ENCODE measurements at regions of chr20 and their contacts with region 1.

Region 1: DNA sequence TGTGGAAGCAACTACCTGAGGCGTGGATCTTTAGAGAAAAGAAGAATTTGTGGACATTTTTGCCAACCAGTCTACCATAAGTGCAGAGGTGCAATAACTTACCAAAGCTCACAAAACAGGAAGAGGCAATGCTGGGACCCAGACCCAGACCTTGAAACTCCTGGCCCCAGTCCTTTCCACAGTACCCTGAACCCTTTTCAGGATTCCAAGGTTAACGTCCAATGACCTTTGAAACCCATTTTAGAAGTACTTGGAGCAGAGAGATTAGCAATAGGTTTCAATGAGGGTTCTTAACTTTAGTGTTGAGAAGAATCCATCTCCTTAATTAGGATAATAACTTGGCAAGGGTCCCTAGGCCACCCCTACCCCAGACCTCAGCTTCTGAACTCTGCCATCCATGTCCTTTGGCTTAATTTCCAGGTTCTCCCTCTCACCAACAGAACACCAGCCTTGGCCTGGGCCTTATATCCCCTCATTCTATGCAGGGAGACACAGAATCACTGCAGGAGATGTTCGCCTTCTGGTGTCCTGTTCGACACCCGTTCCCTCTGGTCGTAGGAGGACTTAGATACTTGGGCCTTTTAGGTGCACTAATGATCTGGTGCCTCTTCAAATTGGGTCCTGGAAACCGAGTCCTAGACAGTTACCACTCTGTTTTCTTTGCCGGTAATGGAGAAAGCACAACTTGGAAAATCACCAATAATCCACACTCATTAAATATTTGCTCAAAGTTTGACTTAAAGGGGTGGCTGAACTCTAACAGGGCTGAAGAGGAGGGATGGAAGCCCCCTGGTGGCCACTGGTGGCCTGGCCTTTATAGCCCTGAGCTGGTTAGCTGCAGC is 40.6 kb downstream of the ISM1 start:
- DNase-seq: peak; percentile 34 to 75 (median 69)
- ATAC-seq: peak; percentile 84
- H3K4me3 ChIP-seq: no peak overlapping the region
- H3K4me3 Mint-ChIP-seq: no peak overlapping the region
- H3K27ac ChIP-seq: no peak overlapping the region
- H3K27ac Mint-ChIP-seq: no peak overlapping the region
- H3K4me1 ChIP-seq: no peaks in the 10 kb centered on the region
- H3K4me1 Mint-ChIP-seq: peaks cover 4% of the 10 kb centered on the region
- H3K27me3 ChIP-seq: no peaks in the 10 kb centered on the region
- H3K27me3 Mint-ChIP-seq: no peaks in the 10 kb centered on the region
- CTCF ChIP-seq: peak; percentile 80

Region 2: GRCh38 chr20:13251106-13251903 is 10.4 kb before region 1 on chr20:
- CTCF ChIA-PET with region 1: interaction called, 27 read pairs
- POLR2A ChIA-PET with region 1: interaction called, 5 read pairs
- intact Hi-C with region 1: no loop called
- DNase-seq: no peak
- ATAC-seq: no peak
- H3K4me3 ChIP-seq: no peak overlapping the region
- H3K4me3 Mint-ChIP-seq: no peak overlapping the region
- H3K27ac ChIP-seq: no peak overlapping the region
- H3K27ac Mint-ChIP-seq: no peak overlapping the region
- H3K4me1 ChIP-seq: peaks cover 39% of the 10 kb centered on the region
- H3K4me1 Mint-ChIP-seq: peaks cover 39% of the 10 kb centered on the region
- H3K27me3 ChIP-seq: no peaks in the 10 kb centered on the region
- H3K27me3 Mint-ChIP-seq: no peaks in the 10 kb centered on the region
- CTCF ChIP-seq: no peak

Region 3: GRCh38 chr20:13312300-13312699 is 50.6 kb after region 1 on chr20:
- CTCF ChIA-PET with region 1: no interaction called
- POLR2A ChIA-PET with region 1: no interaction called
- intact Hi-C with region 1: no loop called
- DNase-seq: no peak
- ATAC-seq: no peak
- H3K4me3 ChIP-seq: no peak overlapping the region
- H3K4me3 Mint-ChIP-seq: no peak overlapping the region
- H3K27ac ChIP-seq: no peak overlapping the region
- H3K27ac Mint-ChIP-seq: no peak overlapping the region
- H3K4me1 ChIP-seq: no peaks in the 10 kb centered on the region
- H3K4me1 Mint-ChIP-seq: no peaks in the 10 kb centered on the region
- H3K27me3 ChIP-seq: no peaks in the 10 kb centered on the region
- H3K27me3 Mint-ChIP-seq: peaks cover 4% of the 10 kb centered on the region
- CTCF ChIP-seq: no peak

Measured in CD8-positive, alpha-beta T cell (primary cell).